Activated CD4-positive, alpha-beta T cell treated with anti-CD3 and anti-CD28 coated beads, Interleukin-2, amount 10 ng/mL, durations not matched to agents 24 days and 14 days (primary cell): ENCODE measurements at regions of chr20 and their contacts with region 1.

Region 1: DNA sequence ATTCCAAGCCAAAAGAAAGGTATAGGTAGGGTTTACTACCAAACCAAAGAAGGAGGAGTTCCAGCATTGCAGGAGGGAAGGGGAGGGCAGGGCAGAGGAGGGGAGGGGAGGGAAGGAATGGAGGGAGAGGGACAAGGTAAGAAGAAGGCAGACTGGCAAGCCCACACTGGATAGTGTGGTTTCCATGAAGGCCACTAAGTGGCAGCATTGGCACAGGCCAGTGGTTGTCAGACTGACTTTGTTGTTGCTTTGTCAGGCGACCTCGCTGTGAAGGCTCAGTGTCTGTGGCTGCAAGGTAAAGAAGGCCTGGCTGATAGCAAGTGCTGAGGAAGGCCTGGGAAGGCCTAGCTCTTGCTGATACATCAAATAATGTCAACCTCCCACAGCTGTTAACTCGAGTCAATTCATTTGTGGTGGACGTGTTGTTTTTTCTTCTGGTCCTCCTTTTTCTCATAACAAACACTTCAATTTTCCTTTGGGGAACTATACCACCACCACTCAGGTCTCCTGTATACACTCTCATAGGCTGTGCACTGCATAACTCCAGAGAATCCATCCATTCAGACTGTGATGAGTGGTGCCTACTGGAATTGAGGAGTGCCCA is 7.7 kb upstream of the ZNF334 start:
- DNase-seq: peak; percentile 87
- H3K4me3 Mint-ChIP-seq: no peak overlapping the region
- H3K27ac Mint-ChIP-seq: no peak overlapping the region
- H3K4me1 Mint-ChIP-seq: no peaks in the 10 kb centered on the region
- H3K27me3 Mint-ChIP-seq: peaks cover 14% of the 10 kb centered on the region

Region 2: DNA sequence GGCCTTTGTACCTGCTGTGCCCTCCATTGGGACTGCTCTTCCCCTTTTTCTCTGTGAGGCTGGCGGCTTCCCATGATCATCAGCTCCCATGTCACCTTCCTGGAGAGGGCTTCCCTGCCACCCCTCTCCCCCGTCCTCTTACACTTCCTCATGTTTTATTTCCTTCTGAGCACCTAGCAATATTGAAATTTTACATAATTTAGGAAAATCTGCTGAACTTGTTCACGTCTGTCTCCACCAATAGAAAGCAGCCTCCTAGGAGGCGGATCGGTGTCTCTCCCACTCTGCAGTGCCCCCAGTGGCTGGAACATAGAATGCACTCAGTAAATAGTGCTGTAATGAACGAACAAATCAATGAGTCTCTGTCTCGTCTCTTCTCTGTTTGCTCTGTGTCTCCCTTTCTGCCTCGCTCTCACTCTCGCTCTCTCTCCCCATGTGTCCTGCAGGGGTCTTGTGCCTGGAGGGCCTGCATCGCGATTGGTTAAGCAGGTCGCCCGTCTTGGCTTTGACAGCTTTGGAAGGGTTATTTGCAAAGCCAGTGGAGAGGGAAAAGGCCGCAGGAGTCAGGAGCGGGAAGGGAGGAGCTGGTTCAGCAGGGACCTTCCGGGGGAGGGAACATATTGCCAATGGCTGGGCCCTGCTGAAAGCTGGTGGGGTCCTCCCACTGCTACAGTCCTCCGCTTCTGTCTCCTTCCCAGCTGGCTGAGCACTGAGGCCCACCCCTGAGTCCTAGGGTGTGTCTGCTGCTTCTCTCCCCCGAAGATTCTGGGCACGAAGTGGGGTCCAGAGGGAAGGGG is 41.5 kb after region 1 on chr20:
- intact Hi-C with region 1: loop called (anchors 5 kb)
- DNase-seq: peak; percentile 90
- H3K4me3 Mint-ChIP-seq: no peak overlapping the region
- H3K27ac Mint-ChIP-seq: no peak overlapping the region
- H3K4me1 Mint-ChIP-seq: peaks cover 32% of the 10 kb centered on the region
- H3K27me3 Mint-ChIP-seq: peaks cover 7% of the 10 kb centered on the region

Region 3: GRCh38 chr20:46681032-46681854 is 160.2 kb after region 1 on chr20:
- intact Hi-C with region 1: loop called (anchors 1 kb)
- DNase-seq: peak; percentile 92
- H3K4me3 Mint-ChIP-seq: no peak overlapping the region
- H3K27ac Mint-ChIP-seq: no peak overlapping the region
- H3K4me1 Mint-ChIP-seq: peaks cover 24% of the 10 kb centered on the region
- H3K27me3 Mint-ChIP-seq: no peaks in the 10 kb centered on the region